ENCODE measurements at regions of chr5 and their contacts with region 1.

Region 1: DNA sequence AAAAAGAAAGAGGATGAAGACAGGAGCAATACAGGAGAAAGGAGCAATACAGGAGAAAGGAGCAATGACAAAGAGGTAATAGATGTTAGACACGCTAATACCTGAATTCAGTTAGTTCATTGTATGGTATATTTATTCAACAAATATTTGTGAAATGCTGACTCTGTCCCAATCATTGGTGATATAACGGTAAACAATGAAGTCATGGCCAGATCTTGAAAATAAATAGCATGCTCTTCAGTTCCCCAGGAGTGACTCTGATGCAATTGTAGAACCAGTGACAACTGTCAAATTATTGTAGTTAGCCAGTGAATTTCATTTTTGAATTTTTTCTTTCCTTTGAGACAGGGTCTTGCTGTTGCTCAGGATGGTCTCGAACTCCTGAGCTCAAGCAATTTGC is 48.0 kb upstream of the SPINK14 start:
- DNase-seq: no peak
- H3K4me3 Mint-ChIP-seq: no peak overlapping the region
- H3K27ac Mint-ChIP-seq: no peak overlapping the region
- H3K4me1 Mint-ChIP-seq: no peaks in the 10 kb centered on the region
- H3K27me3 Mint-ChIP-seq: no peaks in the 10 kb centered on the region

Region 2: DNA sequence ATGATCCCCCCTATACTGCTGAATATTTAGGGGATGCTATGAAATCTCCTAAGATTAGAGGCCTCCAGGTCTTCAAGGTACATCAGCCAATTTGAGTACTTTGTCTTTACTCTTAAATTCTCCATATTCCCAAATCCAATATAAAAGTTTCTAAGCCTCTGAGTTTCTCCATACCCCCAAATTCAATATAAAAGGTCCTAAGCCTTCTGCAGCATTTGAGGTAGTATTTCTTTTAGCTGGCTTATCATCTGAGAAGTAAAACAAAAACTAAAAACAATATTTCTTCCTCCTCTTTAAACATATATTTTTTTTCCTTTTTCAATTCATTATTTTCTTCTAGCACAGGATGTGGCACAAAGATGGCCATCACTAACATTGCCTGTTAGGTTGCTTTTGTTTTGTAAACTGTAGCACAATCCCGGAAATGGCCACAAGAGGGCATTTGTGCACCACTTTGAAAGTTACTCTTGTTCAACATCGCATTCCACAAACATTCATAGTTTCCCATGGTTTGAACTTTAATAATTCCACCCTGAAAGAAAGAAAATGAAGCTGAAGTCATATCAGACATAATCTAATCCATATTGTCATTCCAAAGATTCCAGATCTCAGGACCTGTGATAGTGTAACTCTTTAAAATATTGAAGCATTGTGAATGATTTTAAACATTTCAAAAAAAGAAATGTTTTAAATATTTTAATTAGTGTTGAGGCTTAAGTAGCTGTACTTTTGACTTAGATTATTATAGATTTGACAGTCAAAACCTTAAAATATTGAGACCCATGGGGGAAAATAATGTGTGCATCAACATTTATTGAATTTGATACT is 262.8 kb before region 1 on chr5:
- intact Hi-C with region 1: loop called (anchors 5 kb)
- DNase-seq: peak; percentile 16
- H3K4me3 Mint-ChIP-seq: no peak overlapping the region
- H3K27ac Mint-ChIP-seq: no peak overlapping the region
- H3K4me1 Mint-ChIP-seq: peaks cover 5% of the 10 kb centered on the region
- H3K27me3 Mint-ChIP-seq: peaks cover 6% of the 10 kb centered on the region

Region 3: GRCh38 chr5:147949711-147950573 is 170.4 kb before region 1 on chr5:
- intact Hi-C with region 1: loop called (anchors 2 kb)
- DNase-seq: no peak
- H3K4me3 Mint-ChIP-seq: no peak overlapping the region
- H3K27ac Mint-ChIP-seq: no peak overlapping the region
- H3K4me1 Mint-ChIP-seq: no peaks in the 10 kb centered on the region
- H3K27me3 Mint-ChIP-seq: no peaks in the 10 kb centered on the region

Region 4: GRCh38 chr5:148145916-148146315 is 25.6 kb after region 1 on chr5:
- intact Hi-C with region 1: no loop called
- DNase-seq: no peak
- H3K4me3 Mint-ChIP-seq: no peak overlapping the region
- H3K27ac Mint-ChIP-seq: no peak overlapping the region
- H3K4me1 Mint-ChIP-seq: no peaks in the 10 kb centered on the region
- H3K27me3 Mint-ChIP-seq: no peaks in the 10 kb centered on the region

Measured in activated T-helper 1 cell treated with anti-CD3 and anti-CD28 coated beads, Interleukin-12 subunit alpha, Interleukin-12 subunit beta, Interleukin-2, Interleukin-4 antibody, amounts not matched to agents 30 ng/mL and 10 ng/mL and 1 ng/mL, durations not matched to agents 14 hours and 24 hours and 36 hours (primary cell).